ENCODE measurements at regions of chr13 and their contacts with region 1.

Region 1: GRCh38 chr13:48144413-48145035 is 49.6 kb upstream of the MED4 start:
- DNase-seq: peak in 1 of 2 donors; percentile 57
- H3K4me3 ChIP-seq: no peak overlapping the region
- H3K27ac ChIP-seq: peak overlapping the region; percentile 8 to 49
- H3K4me1 ChIP-seq: peaks cover 0 to 14% (median 6%) of the 10 kb centered on the region in 4 donors
- H3K27me3 ChIP-seq: no peaks in the 10 kb centered on the region
- CTCF ChIP-seq: no peak

Region 2: DNA sequence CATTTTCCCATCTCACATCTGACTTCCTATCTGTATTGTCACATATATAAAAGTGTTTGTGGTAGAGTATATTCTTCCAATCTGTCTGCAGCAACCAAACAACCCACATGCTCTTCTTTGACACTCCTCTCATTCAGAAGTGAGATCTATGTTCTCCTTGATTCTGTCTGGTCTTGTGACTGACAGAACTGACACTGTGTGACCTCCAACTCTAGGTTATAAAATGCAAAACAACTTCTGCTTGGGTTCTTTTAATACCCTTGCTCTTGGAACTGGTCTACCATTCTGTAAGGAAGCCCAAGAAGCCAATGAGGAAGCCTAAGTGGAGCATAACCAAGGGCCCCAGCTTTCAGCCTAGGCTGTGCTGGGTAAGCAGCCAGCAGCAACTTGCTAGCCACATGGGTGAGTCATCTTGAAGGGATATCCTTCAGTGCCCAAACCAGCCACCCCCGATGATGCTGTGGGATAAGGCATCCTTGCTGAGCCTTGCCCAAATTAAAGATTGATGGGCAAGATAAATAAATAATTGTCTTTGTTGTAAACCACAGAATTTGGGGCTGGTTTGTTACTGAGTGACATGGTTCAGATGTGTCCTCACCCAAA is 70.1 kb after region 1 on chr13:
- intact Hi-C with region 1: loop called (anchors 5 kb)
- DNase-seq: no peak
- H3K4me3 ChIP-seq: no peak overlapping the region
- H3K27ac ChIP-seq: no peak overlapping the region
- H3K4me1 ChIP-seq: no peaks in the 10 kb centered on the region
- H3K27me3 ChIP-seq: no peaks in the 10 kb centered on the region
- CTCF ChIP-seq: no peak

Region 3: DNA sequence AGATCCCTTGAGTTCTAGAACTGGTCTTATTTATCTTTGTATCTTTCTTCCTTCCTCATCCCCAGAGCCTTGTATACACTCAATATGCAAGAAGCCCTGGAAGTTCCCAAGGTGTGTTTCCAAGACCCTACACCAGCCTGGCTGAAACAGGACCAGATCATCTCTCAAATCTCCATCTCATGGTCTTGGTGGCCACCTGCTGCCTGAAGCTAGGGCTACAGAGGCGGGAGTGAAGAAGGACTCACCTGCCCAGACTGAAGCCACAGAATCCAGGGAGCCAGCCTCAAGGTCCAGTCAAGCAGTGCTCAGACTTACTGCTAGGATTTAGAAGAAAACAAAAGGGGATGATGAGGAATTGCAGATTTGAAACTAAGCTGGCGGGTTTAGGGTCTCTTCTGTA is 503.1 kb after region 1 on chr13:
- intact Hi-C with region 1: no loop called
- DNase-seq: no peak
- H3K4me3 ChIP-seq: no peak overlapping the region
- H3K27ac ChIP-seq: no peak overlapping the region
- H3K4me1 ChIP-seq: no peaks in the 10 kb centered on the region
- H3K27me3 ChIP-seq: peaks cover 0 to 4% of the 10 kb centered on the region in 2 donors
- CTCF ChIP-seq: no peak